Ascending aorta (tissue), 2 donors: ENCODE measurements at regions of chr9 and their contacts with region 1.

Region 1: GRCh38 chr9:107539427-107540163 is 50.0 kb upstream of the KLF4 start:
- DNase-seq: no peak
- H3K4me3 ChIP-seq: no peak overlapping the region
- H3K27ac ChIP-seq: no peak overlapping the region
- H3K4me1 ChIP-seq: no peaks in the 10 kb centered on the region
- H3K27me3 ChIP-seq: no peaks in the 10 kb centered on the region
- CTCF ChIP-seq: no peak

Region 2: DNA sequence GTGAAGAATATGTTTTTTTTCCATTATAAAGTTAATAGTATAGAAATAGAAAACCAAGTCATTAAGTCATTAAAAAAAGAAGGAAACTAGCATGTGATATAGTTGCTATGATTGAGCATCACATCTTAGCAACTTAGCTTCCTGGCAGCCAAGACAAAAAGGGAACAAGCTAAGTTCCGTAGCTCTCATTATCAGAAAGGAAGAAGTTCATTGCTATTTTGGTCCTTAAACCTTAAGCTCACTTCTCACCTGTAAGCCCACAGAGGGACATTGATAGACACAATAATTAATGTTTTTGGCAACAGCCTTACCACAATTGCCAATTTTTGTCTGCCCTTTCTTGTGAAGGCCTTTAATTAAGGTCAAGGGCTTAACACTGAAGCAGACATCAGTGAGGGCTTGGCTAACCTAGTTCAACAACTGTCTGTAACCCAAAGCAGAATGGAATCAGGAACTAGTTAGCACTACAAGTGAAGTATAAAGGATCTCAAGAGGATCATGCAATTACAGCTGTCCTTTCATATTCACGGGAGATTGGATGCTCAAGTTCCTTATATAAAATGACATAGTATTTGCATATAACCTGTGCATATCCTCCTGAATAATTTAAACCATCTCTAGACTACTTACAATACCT is 26.0 kb before region 1 on chr9:
- intact Hi-C with region 1: loop called (anchors 2 kb)
- DNase-seq: no peak
- H3K4me3 ChIP-seq: no peak overlapping the region
- H3K27ac ChIP-seq: no peak overlapping the region
- H3K4me1 ChIP-seq: no peaks in the 10 kb centered on the region
- H3K27me3 ChIP-seq: no peaks in the 10 kb centered on the region
- CTCF ChIP-seq: no peak